ENCODE measurements at regions of chr17 and their contacts with region 1.

Region 1: GRCh38 chr17:63741221-63742049 is at the start of gene STRADA:
- DNase-seq: peak; percentile 99
- ATAC-seq: peak; percentile 97
- H3K4me3 Mint-ChIP-seq: peak within 1 kb of the TSS; percentile 97
- H3K27ac Mint-ChIP-seq: peak within 1 kb of the TSS; percentile 99
- H3K4me1 Mint-ChIP-seq: peaks cover 8% of the 10 kb centered on the region
- H3K27me3 Mint-ChIP-seq: no peaks in the 10 kb centered on the region
- CTCF ChIP-seq: no peak
- total RNA-seq, gene STRADA: 36.6 to 43.1 TPM (median 41.2 TPM) in 3 replicates

Region 2: GRCh38 chr17:63419949-63420867 is 321.2 kb before region 1 on chr17:
- CTCF ChIA-PET with region 1: no interaction called
- POLR2A ChIA-PET with region 1: no interaction called
- DNase-seq: no peak
- ATAC-seq: no peak
- H3K4me3 Mint-ChIP-seq: no peak overlapping the region
- H3K27ac Mint-ChIP-seq: no peak overlapping the region
- H3K4me1 Mint-ChIP-seq: no peaks in the 10 kb centered on the region; the same call in 1 of the 2 replicates
- H3K27me3 Mint-ChIP-seq: no peaks in the 10 kb centered on the region
- CTCF ChIP-seq: no peak

Region 3: DNA sequence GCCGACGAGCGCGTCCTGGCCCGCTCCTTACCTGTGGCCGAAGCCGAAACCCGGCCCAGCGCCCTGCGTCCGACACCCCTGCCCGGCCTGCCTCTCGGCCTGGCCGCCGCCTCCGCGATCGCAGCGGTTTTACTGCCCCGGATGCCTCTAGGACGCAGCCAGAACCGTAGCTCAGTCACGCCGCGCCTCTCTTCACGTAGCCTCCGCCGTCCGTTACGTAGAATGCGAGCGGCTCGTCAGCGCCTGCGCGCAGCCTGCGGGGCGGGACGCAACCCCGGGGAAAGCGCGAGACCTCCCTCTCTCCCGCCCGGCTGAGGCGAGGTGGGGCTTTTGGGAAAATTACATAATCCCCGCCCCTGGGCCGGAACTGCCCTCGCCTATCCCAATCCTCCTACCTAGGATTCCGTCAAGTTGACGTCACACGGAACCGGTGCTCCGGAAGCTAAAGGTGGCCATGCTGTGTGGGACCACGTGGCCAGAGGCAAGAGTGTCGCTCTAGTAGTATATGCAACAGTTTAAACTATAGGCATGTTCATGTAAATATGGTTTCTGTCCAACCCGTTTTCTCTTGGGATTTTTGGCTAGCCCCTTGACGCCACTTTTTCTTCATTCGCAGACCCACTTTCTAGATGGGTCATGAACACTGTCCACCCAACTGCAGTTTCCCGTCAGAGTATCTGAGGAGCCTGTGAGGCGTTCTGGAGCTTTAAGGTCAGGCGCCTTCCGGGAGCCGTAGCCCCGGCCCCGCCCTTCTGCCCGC is 32.1 kb after region 1 on chr17 and contains the start of gene CCDC47:
- CTCF ChIA-PET with region 1: interaction called, 3 read pairs
- POLR2A ChIA-PET with region 1: interaction called, 12 read pairs
- DNase-seq: peak; percentile 98
- ATAC-seq: peak; percentile 95
- H3K4me3 Mint-ChIP-seq: peak within 1 kb of the TSS; percentile 97
- H3K27ac Mint-ChIP-seq: peak within 1 kb of the TSS; percentile 100
- H3K4me1 Mint-ChIP-seq: peaks cover 19% of the 10 kb centered on the region
- H3K27me3 Mint-ChIP-seq: no peaks in the 10 kb centered on the region
- CTCF ChIP-seq: no peak
- total RNA-seq, gene CCDC47: 63.0 to 70.9 TPM (median 63.9 TPM) in 3 replicates